Caco-2 (cell line): ENCODE measurements at regions of chr6 and their contacts with region 1.

Region 1: GRCh38 chr6:117317261-117317660 is 51.9 kb downstream of the VGLL2 start:
- DNase-seq: peak in 1 of 2 experiments; percentile 6
- H3K4me3 ChIP-seq: no peak overlapping the region
- H3K4me3 Mint-ChIP-seq: no peak overlapping the region
- H3K27ac Mint-ChIP-seq: no peak overlapping the region
- H3K4me1 ChIP-seq: no peaks in the 10 kb centered on the region
- H3K4me1 Mint-ChIP-seq: no peaks in the 10 kb centered on the region
- H3K27me3 ChIP-seq: no peaks in the 10 kb centered on the region
- H3K27me3 Mint-ChIP-seq: peaks cover 5% of the 10 kb centered on the region
- CTCF ChIP-seq: peak; percentile 42 to 72

Region 2: GRCh38 chr6:116876635-116877611 is 440.3 kb before region 1 on chr6 and contains the start of gene RFX6:
- CTCF ChIA-PET with region 1: no interaction called
- POLR2A ChIA-PET with region 1: no interaction called
- intact Hi-C with region 1: loop called (anchors 5 kb)
- DNase-seq: peak; percentile 38 to 51
- H3K4me3 ChIP-seq: peak within 1 kb of the TSS; percentile 53
- H3K4me3 Mint-ChIP-seq: peak within 1 kb of the TSS; percentile 88
- H3K27ac Mint-ChIP-seq: no peak within 1 kb of the TSS
- H3K4me1 ChIP-seq: peaks cover 4% of the 10 kb centered on the region; the same call in 1 of the 2 replicates
- H3K4me1 Mint-ChIP-seq: no peaks in the 10 kb centered on the region
- H3K27me3 ChIP-seq: peaks cover 1% of the 10 kb centered on the region
- H3K27me3 Mint-ChIP-seq: peaks cover 3% of the 10 kb centered on the region
- CTCF ChIP-seq: no peak
- total RNA-seq, gene RFX6: 1.3 and 1.5 TPM in 2 replicates

Region 3: DNA sequence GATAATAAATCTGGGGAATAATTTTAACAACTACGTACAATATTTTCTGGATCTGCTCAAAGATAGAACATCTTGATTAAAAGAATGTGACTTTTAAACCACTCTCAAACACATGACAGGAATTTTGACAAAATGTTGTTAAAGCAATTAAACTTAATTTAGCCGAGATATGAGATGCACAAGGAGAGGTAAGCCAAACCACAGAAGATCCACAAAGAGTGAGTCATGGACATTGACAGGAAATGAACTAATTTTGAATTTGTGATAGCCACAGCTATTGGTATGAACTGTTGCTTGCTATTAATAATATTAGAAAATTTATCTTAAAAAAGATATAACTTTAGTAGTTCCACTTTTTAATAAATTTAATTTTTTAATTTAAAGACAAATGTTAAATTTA is 79.7 kb before region 1 on chr6:
- CTCF ChIA-PET with region 1: no interaction called
- POLR2A ChIA-PET with region 1: no interaction called
- intact Hi-C with region 1: loop called (anchors 1 kb)
- DNase-seq: no peak
- H3K4me3 ChIP-seq: no peak overlapping the region
- H3K4me3 Mint-ChIP-seq: no peak overlapping the region
- H3K27ac Mint-ChIP-seq: no peak overlapping the region
- H3K4me1 ChIP-seq: no peaks in the 10 kb centered on the region
- H3K4me1 Mint-ChIP-seq: no peaks in the 10 kb centered on the region
- H3K27me3 ChIP-seq: no peaks in the 10 kb centered on the region
- H3K27me3 Mint-ChIP-seq: peaks cover 8% of the 10 kb centered on the region
- CTCF ChIP-seq: no peak

Region 4: DNA sequence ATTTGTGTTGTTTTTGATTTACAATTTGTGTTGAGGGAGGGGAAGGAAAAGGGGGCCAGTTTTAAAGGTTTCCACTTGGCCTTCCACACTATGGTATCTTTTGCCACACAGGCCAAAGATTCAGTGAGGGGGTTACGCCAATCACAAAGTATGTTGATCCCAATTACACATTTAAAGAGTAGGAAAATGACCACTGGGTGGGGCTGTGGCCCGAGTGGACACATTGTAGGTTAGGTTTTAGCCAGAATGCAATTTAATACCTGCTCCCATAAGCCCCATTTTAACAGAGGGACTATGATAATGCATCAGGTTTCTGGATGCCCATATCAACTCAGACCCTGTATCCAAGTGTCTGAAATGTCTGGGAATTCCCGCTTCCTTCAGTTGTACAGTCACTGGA is 36.3 kb before region 1 on chr6:
- CTCF ChIA-PET with region 1: interaction called, 3 read pairs
- POLR2A ChIA-PET with region 1: no interaction called
- intact Hi-C with region 1: loop called (anchors 1 kb)
- DNase-seq: peak in 1 of 2 experiments; percentile 32
- H3K4me3 ChIP-seq: no peak overlapping the region
- H3K4me3 Mint-ChIP-seq: no peak overlapping the region
- H3K27ac Mint-ChIP-seq: no peak overlapping the region
- H3K4me1 ChIP-seq: no peaks in the 10 kb centered on the region
- H3K4me1 Mint-ChIP-seq: no peaks in the 10 kb centered on the region
- H3K27me3 ChIP-seq: no peaks in the 10 kb centered on the region
- H3K27me3 Mint-ChIP-seq: peaks cover 13% of the 10 kb centered on the region
- CTCF ChIP-seq: peak in 1 of 2 experiments; percentile 31